Left cardiac atrium (tissue), 4 donors: ENCODE measurements at regions of chr1 and their contacts with region 1.

Region 1: GRCh38 chr1:246907472-246907871 is 24.3 kb downstream of the AHCTF1 start:
- DNase-seq: no peak
- ATAC-seq: peak; percentile 59

Region 2: GRCh38 chr1:246959944-246960693 is 52.6 kb after region 1 on chr1:
- intact Hi-C with region 1: loop called in 1 of 2 experiments (anchors 10 kb)
- DNase-seq: no peak
- ATAC-seq: peak; percentile 23 to 32

Region 3: DNA sequence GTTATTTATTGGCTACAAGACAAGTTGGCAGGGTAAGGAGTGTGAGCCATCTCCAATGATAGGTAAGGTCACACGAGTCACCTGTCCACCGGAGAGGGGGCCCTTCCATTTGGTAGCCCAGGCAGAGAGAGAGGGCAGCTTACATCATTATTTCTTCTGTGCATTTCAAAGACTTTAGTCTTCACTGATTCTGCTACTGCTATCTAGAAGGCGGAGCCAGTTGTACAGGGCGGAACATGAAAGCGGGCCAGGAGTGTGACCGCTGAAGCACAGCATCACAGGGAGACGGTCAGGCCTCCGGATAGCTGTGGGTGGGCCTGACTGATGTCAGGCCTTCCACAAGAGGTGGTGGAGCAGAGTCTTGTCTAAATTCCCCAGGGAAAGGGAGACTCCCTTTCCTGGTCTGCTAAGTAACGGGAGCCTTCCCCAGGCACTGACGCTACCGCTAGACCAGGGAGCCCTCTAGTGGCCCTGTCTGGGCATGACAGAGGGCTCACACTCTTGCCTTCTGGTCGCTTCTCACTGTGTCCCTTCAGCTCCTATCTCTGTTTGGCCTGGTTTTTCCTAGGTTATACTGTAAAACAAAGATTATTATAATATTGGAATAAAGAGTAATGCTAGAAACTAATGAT is 63.7 kb after region 1 on chr1:
- intact Hi-C with region 1: loop called in 1 of 2 experiments (anchors 5 kb)
- DNase-seq: peak; percentile 67
- ATAC-seq: no peak

Region 4: DNA sequence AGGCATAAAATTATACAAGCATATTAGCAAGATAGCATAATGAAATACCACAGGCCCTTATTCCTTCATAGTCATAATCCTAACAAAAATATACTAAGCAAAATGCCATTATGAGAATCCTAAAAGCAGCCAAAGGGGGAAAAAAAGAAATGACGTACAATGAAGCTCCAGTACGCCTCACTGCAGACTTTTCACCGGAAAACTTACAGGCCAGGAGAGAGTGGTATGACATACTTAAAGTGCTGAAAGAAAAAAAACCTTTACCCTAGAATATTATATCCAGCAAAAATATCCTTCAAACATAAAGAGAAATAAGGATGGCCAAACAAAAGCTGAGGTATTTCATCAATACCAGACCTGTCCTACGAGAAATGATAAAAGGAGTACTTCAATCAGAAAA is 80.8 kb after region 1 on chr1:
- intact Hi-C with region 1: no loop called
- DNase-seq: no peak
- ATAC-seq: no peak